Activated CD4-positive, alpha-beta T cell treated with anti-CD3 and anti-CD28 coated beads for 36 hours (primary cell): ENCODE measurements at regions of chr1 and their contacts with region 1.

Region 1: GRCh38 chr1:44985747-44986359 is 542 bp downstream of the EIF2B3 start:
- DNase-seq: no peak
- ATAC-seq: no peak
- H3K4me3 Mint-ChIP-seq: peak overlapping the region; percentile 96
- H3K27ac Mint-ChIP-seq: peak overlapping the region; percentile 87
- H3K4me1 Mint-ChIP-seq: peaks cover 22% of the 10 kb centered on the region
- H3K27me3 Mint-ChIP-seq: no peaks in the 10 kb centered on the region

Region 2: DNA sequence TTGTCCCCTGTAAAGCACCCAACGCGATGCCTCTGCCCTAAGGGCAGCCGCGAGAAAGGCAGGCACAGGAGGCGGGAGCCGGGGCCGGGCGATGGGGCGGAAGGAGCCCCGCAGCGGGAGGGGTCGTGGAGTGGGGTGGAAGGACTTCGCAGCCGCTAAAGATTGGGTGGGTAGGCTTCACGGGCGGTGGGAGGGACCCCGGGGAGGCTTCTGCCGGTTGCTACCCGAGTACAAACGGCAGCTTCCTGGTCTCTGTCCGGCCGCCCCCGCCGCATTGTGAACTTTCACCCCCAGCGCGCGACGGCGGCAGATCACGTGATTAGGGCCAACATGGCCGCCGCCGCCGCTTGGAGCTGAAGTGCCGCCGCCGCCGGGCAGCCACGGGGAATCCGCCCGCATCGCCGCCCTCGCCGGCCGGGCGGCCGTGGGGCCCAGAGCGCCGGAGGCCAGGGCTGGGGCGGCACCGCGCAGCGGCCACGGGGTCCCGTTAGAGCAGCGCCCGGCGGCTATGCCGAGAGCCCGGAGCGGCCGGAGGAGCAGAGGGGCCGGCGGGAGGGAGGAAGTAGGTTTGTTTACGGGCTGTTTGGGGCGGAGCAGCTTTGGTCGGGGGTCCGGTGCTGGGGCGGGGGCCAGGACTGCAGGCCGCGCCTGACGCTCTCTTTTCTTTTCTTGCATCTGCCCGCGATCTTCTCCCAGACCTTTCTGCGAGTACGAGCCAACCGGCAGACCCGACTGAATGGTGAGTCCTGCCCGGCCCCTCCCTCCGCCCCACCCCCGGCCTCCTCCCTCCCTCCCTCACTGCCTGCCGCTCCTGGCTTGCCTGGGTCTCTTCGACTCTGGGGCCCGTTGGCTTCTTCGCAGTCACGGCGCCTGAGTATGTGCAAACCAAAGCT is 354.0 kb before region 1 on chr1:
- CTCF ChIA-PET with region 1: no interaction called
- POLR2A ChIA-PET with region 1: no interaction called
- intact Hi-C with region 1: loop called in 1 of 2 experiments (anchors 5 kb)
- DNase-seq: peak; percentile 95
- ATAC-seq: peak; percentile 81
- H3K4me3 Mint-ChIP-seq: peak overlapping the region; percentile 86
- H3K27ac Mint-ChIP-seq: peak overlapping the region; percentile 97
- H3K4me1 Mint-ChIP-seq: peaks cover 40% of the 10 kb centered on the region
- H3K27me3 Mint-ChIP-seq: no peaks in the 10 kb centered on the region

Region 3: DNA sequence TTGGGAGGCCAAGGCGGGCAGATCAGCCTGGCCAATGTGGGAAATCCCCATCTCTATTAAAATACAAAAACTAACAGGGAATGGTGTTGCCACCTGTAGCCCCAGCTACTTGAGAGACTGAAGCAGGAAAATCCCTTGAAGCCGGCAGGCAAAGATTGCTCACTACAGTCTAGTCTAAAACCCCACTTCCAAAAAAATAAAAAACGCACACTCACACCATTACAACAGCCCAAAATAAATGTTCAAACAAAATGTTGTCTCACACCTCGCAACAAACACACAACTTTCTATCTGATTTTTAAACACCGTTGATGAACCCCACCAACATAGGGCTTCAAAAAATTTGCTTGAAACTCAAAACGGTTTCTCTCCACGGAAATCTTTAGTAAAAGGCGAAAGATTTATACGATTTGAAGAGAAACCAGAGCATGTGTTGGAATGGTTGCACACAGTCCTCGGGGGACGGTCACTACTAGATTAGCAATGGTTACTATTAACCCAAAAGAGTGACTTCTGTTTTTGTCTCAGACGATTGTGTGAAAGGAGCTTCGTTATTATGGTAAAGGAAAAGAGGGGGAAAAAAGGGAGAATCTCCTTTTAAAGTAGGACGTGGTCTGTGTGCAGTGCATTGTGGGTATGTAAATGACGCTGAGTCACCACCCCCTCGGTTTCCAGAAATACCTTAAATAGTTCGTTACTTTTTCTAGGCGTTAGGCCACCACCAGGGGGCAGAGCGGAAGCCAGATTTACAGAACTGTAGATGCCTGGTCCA is 254.9 kb before region 1 on chr1 and contains the start of gene RNU5D-1:
- CTCF ChIA-PET with region 1: interaction called, 3 read pairs
- POLR2A ChIA-PET with region 1: interaction called, 19 read pairs
- intact Hi-C with region 1: loop called in 1 of 2 experiments (anchors 2 kb)
- DNase-seq: peak; percentile 98
- ATAC-seq: peak; percentile 85
- H3K4me3 Mint-ChIP-seq: peak within 1 kb of the TSS; percentile 67
- H3K27ac Mint-ChIP-seq: peak within 1 kb of the TSS; percentile 100
- H3K4me1 Mint-ChIP-seq: peaks cover 45% of the 10 kb centered on the region
- H3K27me3 Mint-ChIP-seq: no peaks in the 10 kb centered on the region
- total RNA-seq, gene RNU5D-1: not detected

Region 4: GRCh38 chr1:44775078-44775929 is 210.5 kb before region 1 on chr1 and contains the start of gene RPS8:
- CTCF ChIA-PET with region 1: no interaction called
- POLR2A ChIA-PET with region 1: no interaction called
- intact Hi-C with region 1: loop called in 1 of 2 experiments (anchors 1 kb)
- DNase-seq: peak; percentile 94
- ATAC-seq: peak; percentile 84
- H3K4me3 Mint-ChIP-seq: peak within 1 kb of the TSS; percentile 96
- H3K27ac Mint-ChIP-seq: peak within 1 kb of the TSS; percentile 100
- H3K4me1 Mint-ChIP-seq: peaks cover 33% of the 10 kb centered on the region
- H3K27me3 Mint-ChIP-seq: no peaks in the 10 kb centered on the region
- total RNA-seq, gene RPS8: 3,005 to 3,275 TPM

Region 5: DNA sequence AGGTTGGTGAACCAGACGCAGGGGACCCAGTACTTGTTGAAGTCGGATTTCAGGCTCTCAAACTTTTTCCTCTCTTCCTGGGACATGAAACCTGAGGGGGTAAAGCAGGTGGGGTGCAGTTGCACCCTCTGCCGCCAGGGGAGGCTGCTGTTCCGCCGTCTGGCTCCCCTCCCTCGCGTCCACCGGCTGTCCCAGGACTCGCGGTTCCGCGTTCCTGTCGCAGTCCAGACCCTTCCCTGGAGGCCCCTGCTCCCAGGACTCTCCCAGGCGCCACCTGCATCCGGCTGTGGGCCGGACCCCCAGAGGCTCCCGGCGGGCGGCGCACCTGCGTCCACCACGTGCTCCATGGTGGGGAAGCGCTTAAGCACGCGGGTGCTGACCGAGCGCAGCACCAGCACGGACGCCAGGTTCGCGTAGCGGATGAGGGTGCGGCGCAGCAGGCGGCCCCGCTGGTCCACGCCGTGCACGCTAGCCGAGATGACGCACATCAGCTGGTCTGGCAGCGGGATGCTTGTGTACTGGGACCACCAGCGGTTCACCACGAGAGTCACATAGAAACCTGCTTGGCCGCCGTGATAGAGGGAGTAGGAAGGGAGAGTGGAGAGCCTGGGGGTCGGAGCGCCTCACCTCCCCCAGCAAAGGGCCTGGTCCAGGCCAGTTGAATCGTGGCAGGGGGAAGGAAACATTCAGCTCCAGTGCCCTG is 199.6 kb before region 1 on chr1:
- CTCF ChIA-PET with region 1: no interaction called
- POLR2A ChIA-PET with region 1: no interaction called
- intact Hi-C with region 1: no loop called
- DNase-seq: peak; percentile 85
- ATAC-seq: peak; percentile 73
- H3K4me3 Mint-ChIP-seq: peak overlapping the region; percentile 66
- H3K27ac Mint-ChIP-seq: peak overlapping the region; percentile 69
- H3K4me1 Mint-ChIP-seq: peaks cover 31% of the 10 kb centered on the region
- H3K27me3 Mint-ChIP-seq: no peaks in the 10 kb centered on the region

Region 6: DNA sequence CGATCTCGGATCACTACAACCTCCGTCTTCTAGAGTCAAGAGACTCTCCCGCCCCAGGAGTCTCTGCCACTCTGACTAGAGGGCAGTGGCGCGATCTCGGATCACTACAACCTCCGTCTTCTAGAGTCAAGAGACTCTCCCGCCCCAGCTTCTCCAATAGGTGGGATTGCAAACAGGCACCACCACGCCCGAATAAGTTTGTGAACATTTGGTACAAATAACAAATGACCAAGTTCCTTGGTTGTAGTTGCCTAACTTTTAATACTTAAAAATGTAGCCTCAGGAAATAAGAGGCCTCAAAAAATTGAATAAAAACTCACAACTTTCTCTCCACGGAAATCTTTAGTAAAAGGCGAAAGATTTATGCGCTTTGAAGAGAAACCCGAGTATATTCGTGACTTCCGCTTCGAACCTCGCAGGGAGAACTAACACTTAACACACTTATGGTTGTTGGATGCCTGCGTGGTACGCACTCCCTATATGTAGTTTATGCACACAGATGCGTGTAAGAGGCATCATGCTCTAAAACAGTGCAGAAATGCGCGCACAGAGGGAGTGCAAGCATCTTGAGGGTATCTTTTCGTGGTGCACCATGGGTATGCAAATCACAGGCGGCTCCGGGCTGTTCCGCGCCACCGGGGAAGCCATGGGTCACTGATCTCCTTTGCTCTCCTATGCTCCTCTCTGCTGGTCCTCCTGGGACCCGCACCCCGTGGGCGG is 166.1 kb before region 1 on chr1:
- CTCF ChIA-PET with region 1: no interaction called
- POLR2A ChIA-PET with region 1: interaction called, 17 read pairs
- intact Hi-C with region 1: loop called in 1 of 2 experiments (anchors 1 kb)
- DNase-seq: peak; percentile 88
- ATAC-seq: peak; percentile 88
- H3K4me3 Mint-ChIP-seq: peak overlapping the region; percentile 85
- H3K27ac Mint-ChIP-seq: peak overlapping the region; percentile 100
- H3K4me1 Mint-ChIP-seq: peaks cover 37% of the 10 kb centered on the region
- H3K27me3 Mint-ChIP-seq: no peaks in the 10 kb centered on the region

Region 7: GRCh38 chr1:45258059-45258650 is 272.3 kb after region 1 on chr1:
- CTCF ChIA-PET with region 1: no interaction called
- POLR2A ChIA-PET with region 1: no interaction called
- intact Hi-C with region 1: no loop called
- DNase-seq: no peak
- ATAC-seq: no peak
- H3K4me3 Mint-ChIP-seq: no peak overlapping the region
- H3K27ac Mint-ChIP-seq: no peak overlapping the region
- H3K4me1 Mint-ChIP-seq: no peaks in the 10 kb centered on the region
- H3K27me3 Mint-ChIP-seq: peaks cover 6% of the 10 kb centered on the region

Region 8: GRCh38 chr1:45499415-45499769 is 513.5 kb after region 1 on chr1:
- CTCF ChIA-PET with region 1: no interaction called
- POLR2A ChIA-PET with region 1: no interaction called
- intact Hi-C with region 1: loop called in 1 of 2 experiments (anchors 1 kb)
- DNase-seq: peak; percentile 45
- ATAC-seq: no peak
- H3K4me3 Mint-ChIP-seq: peak overlapping the region; percentile 81
- H3K27ac Mint-ChIP-seq: peak overlapping the region; percentile 92
- H3K4me1 Mint-ChIP-seq: peaks cover 23% of the 10 kb centered on the region
- H3K27me3 Mint-ChIP-seq: no peaks in the 10 kb centered on the region

Region 9: DNA sequence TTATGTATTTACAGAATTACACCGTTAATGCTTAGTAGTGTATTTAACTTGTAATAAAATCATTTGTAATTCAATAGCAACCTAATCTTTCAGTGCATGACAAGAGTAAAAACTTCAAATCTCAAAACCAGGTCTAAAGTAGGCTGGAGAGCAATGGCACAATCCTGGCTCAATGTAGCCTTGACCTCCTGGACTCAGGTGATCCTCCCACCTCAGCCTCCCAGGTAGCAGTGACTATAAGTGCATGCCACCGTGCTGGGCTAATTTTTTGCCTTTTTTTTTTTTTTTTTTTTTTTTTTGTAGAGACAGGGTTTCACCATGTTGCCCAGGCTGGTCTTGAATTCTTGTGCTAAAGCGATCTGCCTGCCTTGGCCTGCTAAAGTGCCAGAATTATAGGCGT is 753.3 kb after region 1 on chr1:
- CTCF ChIA-PET with region 1: no interaction called
- POLR2A ChIA-PET with region 1: no interaction called
- intact Hi-C with region 1: no loop called
- DNase-seq: no peak
- ATAC-seq: no peak
- H3K4me3 Mint-ChIP-seq: no peak overlapping the region
- H3K27ac Mint-ChIP-seq: no peak overlapping the region
- H3K4me1 Mint-ChIP-seq: peaks cover 10% of the 10 kb centered on the region
- H3K27me3 Mint-ChIP-seq: no peaks in the 10 kb centered on the region